ENCODE measurements at regions of chr12 and their contacts with region 1.

Region 1: GRCh38 chr12:66693901-66694675 is 15.2 kb upstream of the GRIP1 start:
- DNase-seq: peak; percentile 94
- H3K4me3 ChIP-seq: no peak overlapping the region
- H3K27ac ChIP-seq: peak overlapping the region; percentile 44
- H3K4me1 ChIP-seq: peaks cover 52% of the 10 kb centered on the region
- CTCF ChIP-seq: peak; percentile 90

Region 2: DNA sequence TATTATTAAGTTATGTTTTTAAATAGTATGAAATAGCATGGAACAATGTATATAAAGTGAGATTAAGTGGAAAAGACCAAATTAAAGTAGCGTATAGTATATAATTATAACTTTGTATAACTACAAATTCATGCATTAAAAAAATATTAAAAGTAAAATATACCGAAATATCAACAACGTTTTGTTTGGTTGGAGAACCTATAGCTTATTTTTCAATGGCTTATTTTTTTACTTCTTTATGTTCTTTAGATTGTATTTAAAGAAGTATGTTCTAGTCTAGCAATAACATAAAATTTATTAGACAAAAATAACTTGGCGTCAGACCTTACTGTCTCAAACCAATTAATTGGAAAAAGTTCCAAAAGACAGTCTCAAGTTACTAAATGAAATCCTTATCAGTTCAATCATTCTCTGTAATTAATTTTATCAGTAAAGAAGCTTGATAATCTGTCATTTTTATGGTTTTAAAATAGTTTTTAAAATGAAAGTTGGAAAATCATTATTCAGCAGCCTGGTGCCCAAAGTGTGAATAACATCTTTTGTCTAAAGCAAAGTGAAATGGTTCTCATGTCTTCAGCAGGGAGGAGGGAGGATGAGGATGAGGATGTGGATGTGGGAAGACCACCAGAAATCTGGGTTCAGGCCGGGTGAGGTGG is 458.3 kb before region 1 on chr12:
- CTCF ChIA-PET with region 1: no interaction called
- POLR2A ChIA-PET with region 1: interaction called, 8 read pairs
- intact Hi-C with region 1: loop called (anchors 2 kb)
- DNase-seq: peak; percentile 38
- H3K4me3 ChIP-seq: peak overlapping the region; percentile 70
- H3K27ac ChIP-seq: peak overlapping the region; percentile 14
- H3K4me1 ChIP-seq: peaks cover 35% of the 10 kb centered on the region
- CTCF ChIP-seq: peak; percentile 37

Region 3: GRCh38 chr12:66269757-66270383 is 424.2 kb before region 1 on chr12:
- CTCF ChIA-PET with region 1: no interaction called
- POLR2A ChIA-PET with region 1: no interaction called
- intact Hi-C with region 1: loop called (anchors 1 kb)
- DNase-seq: peak; percentile 62
- H3K4me3 ChIP-seq: no peak overlapping the region
- H3K27ac ChIP-seq: no peak overlapping the region
- H3K4me1 ChIP-seq: peaks cover 32% of the 10 kb centered on the region
- CTCF ChIP-seq: peak; percentile 84

Region 4: GRCh38 chr12:66352197-66352596 is 341.9 kb before region 1 on chr12:
- CTCF ChIA-PET with region 1: interaction called, 3 read pairs
- POLR2A ChIA-PET with region 1: no interaction called
- intact Hi-C with region 1: loop called (anchors 1 kb)
- DNase-seq: peak; percentile 67
- H3K4me3 ChIP-seq: no peak overlapping the region
- H3K27ac ChIP-seq: no peak overlapping the region
- H3K4me1 ChIP-seq: no peaks in the 10 kb centered on the region
- CTCF ChIP-seq: peak; percentile 70

Region 5: GRCh38 chr12:66624806-66625205 is 69.3 kb before region 1 on chr12:
- CTCF ChIA-PET with region 1: interaction called, 8 read pairs
- POLR2A ChIA-PET with region 1: interaction called, 11 read pairs
- intact Hi-C with region 1: no loop called
- DNase-seq: peak; percentile 73
- H3K4me3 ChIP-seq: peak overlapping the region; percentile 46
- H3K27ac ChIP-seq: peak overlapping the region; percentile 100
- H3K4me1 ChIP-seq: peaks cover 94% of the 10 kb centered on the region
- CTCF ChIP-seq: no peak

Region 6: DNA sequence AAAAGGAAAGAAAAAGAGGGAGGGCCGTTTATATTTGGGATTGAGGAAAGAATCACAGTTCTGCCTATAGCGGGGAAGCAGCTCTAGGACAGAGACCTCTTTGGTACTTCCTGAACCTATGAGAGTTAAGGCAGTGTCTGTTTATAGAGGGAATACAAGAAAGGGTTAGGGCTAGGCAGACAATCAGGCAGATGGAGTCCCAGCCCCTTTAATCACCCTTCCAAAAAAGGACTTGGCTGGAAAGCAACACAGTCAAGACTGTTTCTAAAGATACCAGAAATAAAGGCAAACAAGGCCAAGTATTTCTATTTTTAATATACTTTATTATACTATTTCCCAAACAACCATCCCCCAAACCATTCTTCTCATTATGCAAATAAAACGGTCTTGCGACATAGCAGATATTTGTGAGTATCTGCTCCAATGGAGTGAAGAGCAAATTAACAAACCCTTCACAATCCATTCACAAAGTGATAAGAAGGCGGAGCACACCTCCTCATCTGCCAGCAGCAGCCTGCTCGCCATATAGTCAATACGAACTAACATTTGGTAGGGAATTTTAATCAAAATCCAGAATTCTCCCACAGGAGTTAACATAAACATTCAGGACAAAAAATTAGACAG is 14.5 kb before region 1 on chr12:
- CTCF ChIA-PET with region 1: no interaction called
- POLR2A ChIA-PET with region 1: interaction called, 20 read pairs
- intact Hi-C with region 1: no loop called
- DNase-seq: no peak
- H3K4me3 ChIP-seq: no peak overlapping the region
- H3K27ac ChIP-seq: no peak overlapping the region
- H3K4me1 ChIP-seq: peaks cover 3% of the 10 kb centered on the region
- CTCF ChIP-seq: no peak

Region 7: DNA sequence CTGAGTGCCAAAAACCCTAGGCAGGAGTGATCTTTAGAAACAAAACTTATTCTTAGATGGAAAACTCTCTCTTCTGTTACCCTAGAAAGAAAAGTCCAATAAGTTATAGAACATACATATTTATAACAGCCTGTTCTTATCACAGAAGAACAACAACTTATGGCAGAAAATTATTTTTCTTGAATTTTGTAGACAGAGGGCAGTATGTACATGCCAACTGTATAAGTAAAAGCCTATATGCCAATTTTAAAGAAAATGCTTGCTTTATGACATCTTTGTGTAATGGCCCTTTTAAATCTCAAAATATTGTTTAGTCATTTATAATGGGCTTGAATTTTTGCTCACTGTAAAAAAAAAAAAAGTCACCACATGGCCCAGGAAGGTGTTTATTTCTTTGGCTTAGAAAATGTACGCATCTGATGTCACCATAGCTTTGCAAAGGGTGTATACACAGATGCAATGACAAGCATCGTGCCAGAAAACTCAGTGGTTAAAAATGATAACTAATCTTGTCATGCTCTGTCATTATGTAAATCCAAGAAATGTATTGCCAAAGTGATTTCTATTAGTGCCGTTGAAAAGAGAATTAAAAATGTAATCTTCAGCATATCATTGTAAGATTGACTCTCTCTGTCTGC is 23.1 kb after region 1 on chr12:
- CTCF ChIA-PET with region 1: no interaction called
- POLR2A ChIA-PET with region 1: no interaction called
- intact Hi-C with region 1: no loop called
- DNase-seq: no peak
- H3K4me3 ChIP-seq: no peak overlapping the region
- H3K27ac ChIP-seq: no peak overlapping the region
- H3K4me1 ChIP-seq: peaks cover 5% of the 10 kb centered on the region
- CTCF ChIP-seq: peak; percentile 76

Region 8: GRCh38 chr12:66755727-66756395 is 61.8 kb after region 1 on chr12:
- CTCF ChIA-PET with region 1: no interaction called
- POLR2A ChIA-PET with region 1: no interaction called
- intact Hi-C with region 1: no loop called
- DNase-seq: peak; percentile 31
- H3K4me3 ChIP-seq: no peak overlapping the region
- H3K27ac ChIP-seq: no peak overlapping the region
- H3K4me1 ChIP-seq: peaks cover 12% of the 10 kb centered on the region
- CTCF ChIP-seq: no peak

Measured in OCI-LY7 (cell line).